Gastrocnemius medialis (tissue), 4 donors: ENCODE measurements at regions of chr12 and their contacts with region 1.

Region 1: GRCh38 chr12:107093417-107094182 is at the start of gene CRY1:
- DNase-seq: peak; percentile 91 to 94
- ATAC-seq: peak; percentile 93 to 94
- H3K4me3 ChIP-seq: peak within 1 kb of the TSS; percentile 92 to 99 (median 98)
- H3K27ac ChIP-seq: peak within 1 kb of the TSS; percentile 98 to 100 (median 99)
- H3K4me1 ChIP-seq: peaks cover 17 to 27% of the 10 kb centered on the region in 2 donors
- H3K27me3 ChIP-seq: no peaks in the 10 kb centered on the region
- CTCF ChIP-seq: no peak
- POLR2A ChIP-seq: peak; percentile 98 to 99
- total RNA-seq, gene CRY1: 11.1 to 22.7 (median 11.7) TPM

Region 2: GRCh38 chr12:106309671-106310505 is 783.7 kb before region 1 on chr12:
- in situ Hi-C with region 1: no loop called
- intact Hi-C with region 1: loop called (anchors 5 kb)
- DNase-seq: peak; percentile 36 to 74
- ATAC-seq: peak; percentile 25 to 45
- H3K4me3 ChIP-seq: no peak overlapping the region
- H3K27ac ChIP-seq: peak overlapping the region; percentile 91 to 97 (median 94)
- H3K4me1 ChIP-seq: peaks cover 76 to 77% of the 10 kb centered on the region in 2 donors
- H3K27me3 ChIP-seq: no peaks in the 10 kb centered on the region
- CTCF ChIP-seq: no peak
- POLR2A ChIP-seq: no peak

Region 3: DNA sequence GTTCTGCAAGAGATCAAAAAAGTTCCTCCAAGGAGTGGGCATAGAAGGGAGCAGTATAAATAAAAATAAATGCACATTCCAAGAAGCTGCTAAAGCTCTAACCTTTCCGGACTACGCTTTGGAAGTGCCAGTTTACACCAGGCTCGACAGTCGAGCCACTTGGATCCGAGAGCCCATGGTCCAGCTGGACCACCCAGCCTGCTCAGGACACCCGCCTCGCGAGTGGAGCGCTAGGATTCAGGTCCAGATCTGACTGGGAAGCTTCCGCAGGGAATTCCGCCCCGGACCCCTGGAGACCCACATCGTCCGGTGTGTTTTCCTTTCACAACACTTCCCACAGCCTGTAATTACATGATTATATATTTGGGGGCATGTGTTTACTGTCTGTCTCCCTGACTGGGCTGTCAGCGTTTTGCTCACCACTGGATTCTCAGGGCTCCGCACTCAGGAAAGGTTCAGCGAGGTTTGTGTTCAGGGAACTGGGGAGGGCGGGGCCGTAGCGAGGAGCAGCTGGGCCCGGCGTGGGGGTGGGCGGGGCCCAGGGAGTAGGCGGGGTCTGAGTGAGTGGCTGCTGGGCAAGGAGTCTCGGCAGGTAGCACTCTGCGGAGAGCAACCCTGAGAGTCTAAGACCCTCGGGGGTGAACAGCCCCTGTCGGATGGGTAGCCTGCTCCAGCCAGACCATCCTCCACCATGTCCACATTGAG is 190.2 kb before region 1 on chr12:
- in situ Hi-C with region 1: no loop called
- intact Hi-C with region 1: loop called (anchors 5 kb)
- DNase-seq: peak; percentile 27 to 62
- ATAC-seq: peak; percentile 90 to 93
- H3K4me3 ChIP-seq: peak overlapping the region; percentile 41 to 91 (median 57)
- H3K27ac ChIP-seq: no peak overlapping the region
- H3K4me1 ChIP-seq: peaks cover 3 to 4% of the 10 kb centered on the region in 2 donors
- H3K27me3 ChIP-seq: no peaks in the 10 kb centered on the region
- CTCF ChIP-seq: no peak
- POLR2A ChIP-seq: no peak

Region 4: GRCh38 chr12:106986625-106987430 is 106.8 kb before region 1 on chr12 and contains the start of gene MTERF2:
- in situ Hi-C with region 1: loop called in 1 of 4 experiments (anchors 25 kb)
- intact Hi-C with region 1: loop called (anchors 1 kb)
- DNase-seq: peak; percentile 95
- ATAC-seq: peak; percentile 96 to 97
- H3K4me3 ChIP-seq: peak within 1 kb of the TSS; percentile 69 to 90 (median 74)
- H3K27ac ChIP-seq: peak within 1 kb of the TSS; percentile 87 to 98 (median 93)
- H3K4me1 ChIP-seq: peaks cover 17 to 18% of the 10 kb centered on the region in 2 donors
- H3K27me3 ChIP-seq: no peaks in the 10 kb centered on the region
- CTCF ChIP-seq: no peak
- POLR2A ChIP-seq: peak; percentile 77 to 86
- total RNA-seq, gene MTERF2: 5.0 to 24.6 (median 13.7) TPM

Region 5: GRCh38 chr12:107225635-107226034 is 132.0 kb after region 1 on chr12:
- in situ Hi-C with region 1: no loop called
- intact Hi-C with region 1: no loop called
- DNase-seq: no peak
- ATAC-seq: no peak
- H3K4me3 ChIP-seq: no peak overlapping the region
- H3K27ac ChIP-seq: no peak overlapping the region
- H3K4me1 ChIP-seq: no peaks in the 10 kb centered on the region
- H3K27me3 ChIP-seq: peaks cover 0 to 6% (median 0%) of the 10 kb centered on the region in 3 donors
- CTCF ChIP-seq: no peak
- POLR2A ChIP-seq: no peak